ENCODE measurements at regions of chr2 and their contacts with region 1.

Region 1: GRCh38 chr2:8939486-8940114 is 63.9 kb downstream of the MBOAT2 start:
- DNase-seq: no peak

Region 2: GRCh38 chr2:8953525-8953924 is 13.9 kb after region 1 on chr2:
- intact Hi-C with region 1: loop called (anchors 1 kb)
- DNase-seq: no peak

Region 3: DNA sequence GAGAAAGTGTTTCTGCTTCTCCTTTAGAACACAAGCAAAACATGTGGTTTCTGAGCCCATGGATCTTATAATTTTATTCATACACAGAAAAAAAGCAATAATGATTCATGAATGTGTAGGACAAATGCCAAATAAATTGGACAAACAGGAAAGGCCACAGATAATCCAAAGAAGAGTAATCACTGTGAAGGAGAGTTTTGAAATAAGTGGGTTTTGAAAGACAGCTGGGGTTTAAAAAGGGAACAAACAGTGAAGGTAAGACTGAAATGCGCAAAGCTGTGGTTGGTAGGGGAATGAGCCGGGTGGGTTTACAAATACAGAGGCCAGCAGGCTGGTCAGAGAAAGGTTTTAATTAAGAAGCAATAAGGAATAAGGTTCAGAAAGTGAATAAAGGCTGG is 113.9 kb after region 1 on chr2:
- intact Hi-C with region 1: no loop called
- DNase-seq: no peak